ENCODE measurements at regions of chr3 and their contacts with region 1.

Region 1: GRCh38 chr3:37375184-37376127 is 201.1 kb upstream of the LRRFIP2 start:
- DNase-seq: no peak
- CTCF ChIP-seq: no peak

Region 2: DNA sequence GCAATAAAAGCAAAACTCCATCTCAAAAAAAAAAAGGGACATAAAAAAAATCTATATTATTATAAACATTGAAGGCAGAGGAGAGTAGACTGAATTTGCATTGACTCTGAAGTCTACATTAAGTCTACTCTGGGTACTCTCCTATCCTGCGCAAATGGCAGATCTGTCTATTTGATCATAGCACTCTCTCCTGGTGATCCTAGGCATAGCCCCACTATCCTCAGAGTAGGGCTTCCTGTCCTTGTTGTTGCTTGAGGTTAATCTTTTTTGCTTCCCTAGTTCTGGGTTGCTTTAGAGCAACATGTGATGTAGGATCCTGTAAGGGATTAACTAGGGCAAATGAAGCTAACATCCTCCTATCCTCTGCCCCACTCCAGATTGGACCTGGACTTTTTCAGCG is 119.0 kb before region 1 on chr3:
- CTCF ChIA-PET with region 1: no interaction called
- POLR2A ChIA-PET with region 1: no interaction called
- DNase-seq: no peak
- CTCF ChIP-seq: no peak

Region 3: GRCh38 chr3:37386627-37387230 is 11.3 kb after region 1 on chr3:
- CTCF ChIA-PET with region 1: interaction called, 19 read pairs
- POLR2A ChIA-PET with region 1: no interaction called
- DNase-seq: no peak
- CTCF ChIP-seq: no peak